ENCODE measurements at regions of chr11 and their contacts with region 1.

Region 1: GRCh38 chr11:73716101-73717056 is 44.5 kb downstream of the RAB6A start:
- DNase-seq: no peak
- H3K4me3 ChIP-seq: peak overlapping the region in 3 of 59 donors; percentile 2 to 17 (median 5)
- H3K27ac ChIP-seq: peak overlapping the region; percentile 0 to 82 (median 64)
- H3K27me3 ChIP-seq: no peaks in the 10 kb centered on the region
- CTCF ChIP-seq: no peak

Region 2: GRCh38 chr11:73121692-73122091 is 594.7 kb before region 1 on chr11:
- intact Hi-C with region 1: no loop called
- DNase-seq: no peak
- H3K4me3 ChIP-seq: no peak overlapping the region
- H3K27ac ChIP-seq: no peak overlapping the region
- H3K27me3 ChIP-seq: no peaks in the 10 kb centered on the region
- CTCF ChIP-seq: no peak

Region 3: DNA sequence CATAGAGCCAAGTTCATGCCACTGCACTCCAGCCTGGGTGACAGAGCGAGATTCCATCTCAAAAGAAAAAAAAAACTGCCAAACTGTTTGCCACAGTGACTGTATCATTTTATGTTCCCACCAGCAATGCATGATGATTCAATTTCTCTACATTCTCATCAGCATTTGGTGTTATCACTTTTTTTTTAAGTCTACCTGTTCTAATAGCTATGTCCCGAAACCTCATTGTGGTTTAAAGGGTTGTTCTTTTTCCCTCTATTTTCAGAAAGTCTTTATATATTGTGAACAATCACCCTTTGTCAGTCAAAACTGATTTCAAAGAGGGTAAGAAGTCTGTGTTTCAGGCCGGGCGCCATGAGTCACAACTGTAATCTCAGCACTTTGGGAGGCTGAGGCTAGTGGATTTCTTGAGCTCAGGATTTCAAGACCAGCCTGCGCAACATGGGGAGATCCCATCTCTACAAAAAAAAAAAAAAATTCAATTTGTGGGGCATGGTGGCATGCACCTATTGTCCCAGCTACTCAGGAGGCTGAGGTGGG is 103.7 kb before region 1 on chr11:
- intact Hi-C with region 1: no loop called
- DNase-seq: no peak
- H3K4me3 ChIP-seq: no peak overlapping the region
- H3K27ac ChIP-seq: no peak overlapping the region
- H3K27me3 ChIP-seq: no peaks in the 10 kb centered on the region
- CTCF ChIP-seq: no peak

Region 4: DNA sequence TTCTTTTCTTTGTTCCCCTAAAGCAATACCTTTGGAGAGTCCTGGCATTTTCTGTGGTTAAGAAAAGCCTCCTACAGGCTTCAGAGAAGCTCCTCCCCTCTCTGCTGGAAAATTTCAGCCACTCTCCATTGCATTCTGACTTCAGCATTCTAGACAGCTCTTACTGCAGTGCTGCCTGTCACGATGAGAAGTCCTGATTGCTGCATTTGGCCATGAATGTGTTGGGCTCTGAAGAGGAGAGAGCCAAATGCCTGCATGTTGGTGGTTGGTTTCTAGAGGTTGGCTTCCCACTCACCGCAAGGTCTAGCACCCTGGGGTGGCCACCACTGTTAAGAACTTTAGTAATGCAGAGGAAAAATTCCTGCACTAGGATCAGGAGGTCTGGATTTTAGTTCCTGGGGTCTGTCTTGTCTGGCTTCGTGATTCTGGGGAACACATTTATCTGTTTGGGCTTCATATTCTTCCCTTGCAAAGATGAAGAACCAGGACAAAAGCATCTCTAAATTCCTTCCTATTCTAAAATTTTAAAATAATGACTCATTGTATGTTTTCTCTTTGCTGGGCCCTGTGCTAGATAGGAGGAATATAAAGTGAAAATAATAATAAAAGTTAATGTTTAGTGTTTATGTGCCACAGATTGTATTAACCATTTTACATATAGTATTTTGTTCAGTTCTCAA is 122.2 kb after region 1 on chr11:
- intact Hi-C with region 1: no loop called
- DNase-seq: peak in 1 of 10 donors; percentile 30
- H3K4me3 ChIP-seq: no peak overlapping the region
- H3K27ac ChIP-seq: peak overlapping the region in 56 of 59 donors; percentile 0 to 83 (median 69)
- H3K27me3 ChIP-seq: no peaks in the 10 kb centered on the region
- CTCF ChIP-seq: no peak

Region 5: GRCh38 chr11:73889019-73889418 is 172.6 kb after region 1 on chr11:
- intact Hi-C with region 1: loop called in 1 of 2 experiments (anchors 10 kb)
- DNase-seq: no peak
- H3K4me3 ChIP-seq: no peak overlapping the region
- H3K27ac ChIP-seq: peak overlapping the region in 37 of 59 donors; percentile 0 to 68 (median 25)
- H3K27me3 ChIP-seq: no peaks in the 10 kb centered on the region
- CTCF ChIP-seq: no peak

Measured in dorsolateral prefrontal cortex (tissue), 120 donors.